Dorsolateral prefrontal cortex (tissue), 120 donors: ENCODE measurements at regions of chr9 and their contacts with region 1.

Region 1: DNA sequence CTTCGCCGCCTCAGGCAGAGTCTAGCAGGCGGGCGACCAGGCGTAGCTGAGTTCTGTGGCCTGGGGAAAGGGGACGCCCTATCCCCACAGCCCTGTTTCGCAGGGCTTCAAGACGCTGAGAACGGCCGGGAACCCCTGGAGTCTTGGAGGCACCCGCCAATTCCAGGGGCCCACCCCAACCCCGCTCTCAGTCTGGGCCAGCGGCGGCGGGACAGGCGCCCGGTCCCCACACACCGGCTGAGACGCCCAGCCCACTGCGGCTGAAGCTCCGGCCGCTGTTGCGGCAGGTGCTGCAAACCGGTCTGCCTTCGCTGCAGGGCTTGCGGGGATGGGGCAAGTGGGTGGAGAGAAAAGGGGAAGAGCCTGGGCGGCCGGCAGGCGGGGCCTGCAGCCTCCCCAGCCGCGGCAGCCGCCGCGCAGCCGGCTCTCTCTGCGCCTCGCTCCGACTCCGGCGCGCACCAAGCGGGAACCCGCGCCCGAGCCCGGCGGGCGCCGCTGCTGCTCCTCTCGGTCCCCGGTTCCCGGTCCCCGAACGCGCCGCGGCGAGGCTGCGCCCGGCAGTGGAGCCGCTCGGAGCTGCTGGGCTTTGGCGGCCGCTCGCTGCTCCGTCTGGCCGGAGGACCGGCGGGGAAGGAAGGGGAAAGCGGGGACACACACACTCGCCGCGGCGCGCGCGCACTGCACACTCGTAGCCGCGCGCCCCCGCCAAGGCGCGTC is at the start of gene PIP5K1B:
- DNase-seq: peak; percentile 22 to 75 (median 60)
- H3K4me3 ChIP-seq: peak within 1 kb of the TSS; percentile 48 to 83 (median 72)
- H3K27ac ChIP-seq: peak within 1 kb of the TSS in 54 of 59 donors; percentile 21 to 90 (median 76)
- H3K27me3 ChIP-seq: peaks cover 0 to 22% (median 0%) of the 10 kb centered on the region in 45 donors
- CTCF ChIP-seq: peak in 8 of 56 donors; percentile 7 to 21 (median 15)
- total RNA-seq, gene PIP5K1B: 5.1 to 44.4 (median 21.5) TPM

Region 2: DNA sequence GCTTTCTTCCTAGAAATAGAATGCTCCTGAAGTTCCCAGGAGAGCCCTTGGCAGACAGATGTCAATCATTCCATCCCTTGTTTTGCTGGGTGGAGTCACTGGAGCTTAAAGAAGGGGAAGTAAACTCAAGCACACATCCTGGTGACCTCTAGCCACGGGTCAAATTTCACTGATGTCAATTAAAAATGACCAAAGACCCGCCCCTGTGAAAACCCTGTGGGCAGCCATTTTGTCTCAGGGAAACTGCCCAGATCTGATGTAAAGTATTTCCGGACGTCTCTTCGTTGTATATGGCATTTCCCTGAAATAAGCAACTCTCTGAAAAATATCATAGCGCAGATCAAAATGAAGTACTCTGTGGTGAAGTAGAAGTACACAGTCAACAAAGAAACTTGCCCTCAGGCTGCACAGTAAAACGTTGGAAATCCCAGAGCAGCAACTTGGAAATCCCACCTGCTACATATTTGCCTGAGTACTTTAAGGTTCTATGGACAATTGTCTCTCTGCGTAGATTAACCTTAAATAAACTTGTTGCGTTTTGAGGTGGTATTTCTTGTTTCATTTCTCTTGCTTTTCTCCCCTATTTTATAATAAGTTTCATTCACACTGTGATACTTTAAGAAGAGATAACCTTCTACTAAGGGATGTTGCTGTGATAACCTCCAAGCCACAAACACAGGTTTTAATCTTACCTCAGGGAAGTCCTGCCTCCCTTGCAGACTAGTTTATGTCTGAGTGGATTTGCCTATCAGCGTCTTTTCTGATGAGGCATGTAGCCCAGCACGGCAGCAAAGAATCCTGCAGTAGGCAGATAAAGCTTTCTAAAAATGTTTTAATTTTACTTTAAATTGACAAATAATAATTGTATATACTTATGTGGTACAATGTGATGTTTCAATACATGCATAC is 60.8 kb before region 1 on chr9:
- intact Hi-C with region 1: no loop called
- DNase-seq: no peak
- H3K4me3 ChIP-seq: no peak overlapping the region
- H3K27ac ChIP-seq: no peak overlapping the region
- H3K27me3 ChIP-seq: no peaks in the 10 kb centered on the region
- CTCF ChIP-seq: no peak

Region 3: GRCh38 chr9:68664036-68664435 is 40.9 kb before region 1 on chr9:
- intact Hi-C with region 1: no loop called
- DNase-seq: no peak
- H3K4me3 ChIP-seq: no peak overlapping the region
- H3K27ac ChIP-seq: no peak overlapping the region
- H3K27me3 ChIP-seq: peaks cover 0 to 3% (median 0%) of the 10 kb centered on the region in 45 donors
- CTCF ChIP-seq: no peak

Region 4: GRCh38 chr9:68779558-68780384 is 74.8 kb after region 1 on chr9:
- intact Hi-C with region 1: loop called in 1 of 2 experiments (anchors 5 kb)
- DNase-seq: peak; percentile 79 to 92 (median 84)
- H3K4me3 ChIP-seq: peak overlapping the region; percentile 58 to 91 (median 83)
- H3K27ac ChIP-seq: peak overlapping the region; percentile 76 to 99 (median 93)
- H3K27me3 ChIP-seq: no peaks in the 10 kb centered on the region
- CTCF ChIP-seq: peak in 55 of 56 donors; percentile 21 to 88 (median 68)

Region 5: DNA sequence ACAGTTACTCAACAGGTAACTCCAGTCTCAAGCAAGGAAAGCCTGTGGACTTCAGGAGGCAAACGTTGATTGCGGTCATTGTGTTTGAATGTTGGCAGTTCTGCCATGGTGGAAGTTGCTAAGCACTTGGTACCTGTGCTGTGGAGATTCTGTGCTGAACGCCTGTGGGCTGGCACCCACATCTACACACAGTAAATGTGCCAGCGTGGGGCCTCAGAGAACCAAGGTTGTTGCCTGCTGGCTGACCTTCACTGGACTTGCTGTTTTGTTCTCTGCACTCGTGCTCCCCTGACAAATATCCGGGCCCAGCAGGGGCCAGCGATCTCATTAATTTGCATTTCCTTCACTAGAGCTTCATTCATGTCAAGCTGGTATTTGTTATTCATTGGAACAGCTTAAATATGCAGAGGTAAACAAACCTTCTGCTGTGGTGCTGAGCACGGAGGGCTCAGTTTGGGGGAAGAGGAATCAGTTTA is 167.1 kb after region 1 on chr9:
- intact Hi-C with region 1: no loop called
- DNase-seq: peak in 1 of 10 donors; percentile 67
- H3K4me3 ChIP-seq: no peak overlapping the region
- H3K27ac ChIP-seq: peak overlapping the region in 2 of 59 donors; percentile 6 to 21
- H3K27me3 ChIP-seq: no peaks in the 10 kb centered on the region
- CTCF ChIP-seq: no peak

Region 6: GRCh38 chr9:68999393-69000105 is 294.6 kb after region 1 on chr9:
- intact Hi-C with region 1: loop called in 1 of 2 experiments (anchors 10 kb)
- DNase-seq: peak in 8 of 10 donors; percentile 56 to 81 (median 70)
- H3K4me3 ChIP-seq: no peak overlapping the region
- H3K27ac ChIP-seq: peak overlapping the region in 16 of 59 donors; percentile 10 to 77 (median 52)
- H3K27me3 ChIP-seq: no peaks in the 10 kb centered on the region
- CTCF ChIP-seq: peak; percentile 57 to 96 (median 81)

Region 7: DNA sequence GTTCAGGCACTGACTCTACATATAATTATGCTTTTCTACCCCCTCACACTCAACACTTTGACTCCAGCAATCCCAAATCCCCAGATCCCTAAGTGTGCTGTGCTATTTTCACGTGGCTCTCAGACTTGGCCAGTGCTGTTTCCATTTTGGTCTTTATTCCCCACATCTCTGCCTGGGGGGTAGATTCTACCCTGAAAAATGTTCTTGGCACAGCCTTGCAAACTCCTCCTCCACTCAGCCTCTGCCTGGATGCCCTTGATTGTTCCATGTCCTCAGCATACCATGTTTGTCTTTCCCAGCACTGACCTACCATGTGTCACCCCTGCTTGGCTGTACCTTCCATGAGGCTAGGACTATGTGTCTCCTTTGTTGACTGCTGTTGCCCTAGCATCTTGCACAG is 373.6 kb after region 1 on chr9:
- intact Hi-C with region 1: no loop called
- DNase-seq: no peak
- H3K4me3 ChIP-seq: no peak overlapping the region
- H3K27ac ChIP-seq: no peak overlapping the region
- H3K27me3 ChIP-seq: no peaks in the 10 kb centered on the region
- CTCF ChIP-seq: no peak